CD8-positive, alpha-beta T cell (primary cell): ENCODE measurements at regions of chr4 and their contacts with region 1.

Region 1: GRCh38 chr4:2462218-2462991 is 6.5 kb upstream of the RNF4 start:
- DNase-seq: peak; percentile 31 to 87 (median 69)
- ATAC-seq: peak; percentile 96
- H3K4me3 ChIP-seq: peak overlapping the region in 1 of 2 experiments; percentile 50
- H3K4me3 Mint-ChIP-seq: peak overlapping the region; percentile 78
- H3K27ac ChIP-seq: no peak overlapping the region
- H3K27ac Mint-ChIP-seq: no peak overlapping the region
- H3K4me1 ChIP-seq: peaks cover 4% of the 10 kb centered on the region
- H3K4me1 Mint-ChIP-seq: peaks cover 10% of the 10 kb centered on the region
- H3K27me3 ChIP-seq: no peaks in the 10 kb centered on the region
- H3K27me3 Mint-ChIP-seq: no peaks in the 10 kb centered on the region
- CTCF ChIP-seq: peak; percentile 57

Region 2: DNA sequence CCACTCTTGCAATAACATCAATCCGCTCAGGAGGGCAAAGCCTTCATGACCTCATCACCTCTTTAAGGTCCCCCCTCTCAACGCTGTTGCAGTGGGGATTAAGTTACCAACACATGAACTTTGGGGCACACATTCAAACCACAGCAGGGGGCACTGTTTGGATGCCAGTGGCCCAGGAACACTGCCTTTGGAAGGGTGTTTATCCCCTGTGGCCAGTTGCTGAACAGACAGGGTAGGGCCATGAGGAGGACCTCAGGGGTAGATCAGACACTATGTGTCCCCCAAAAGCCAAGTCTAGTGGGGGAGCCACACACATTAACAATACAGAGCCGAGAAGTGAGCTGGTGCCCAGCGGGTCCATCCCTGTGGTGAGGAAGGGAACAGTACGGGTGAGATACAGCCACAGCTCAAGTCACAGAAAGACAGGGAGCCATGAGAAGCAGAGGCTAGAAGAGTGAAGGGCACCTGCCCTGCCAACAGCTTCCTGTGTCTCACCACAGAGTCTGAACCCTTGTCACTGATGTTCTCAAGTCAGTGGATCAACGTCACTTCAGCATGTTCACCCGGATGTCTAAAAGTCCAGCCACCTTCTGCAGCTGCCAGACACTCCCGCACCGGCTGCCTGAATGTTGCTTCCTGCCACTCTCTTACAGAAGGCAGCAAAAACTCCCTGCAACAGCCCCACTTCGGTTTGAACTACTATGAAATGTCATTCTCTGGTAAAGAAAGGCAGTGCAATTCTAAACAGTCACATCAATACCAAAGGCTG is 180.6 kb before region 1 on chr4:
- CTCF ChIA-PET with region 1: interaction called, 4 read pairs
- POLR2A ChIA-PET with region 1: no interaction called
- intact Hi-C with region 1: loop called in 1 of 2 experiments (anchors 1 kb)
- DNase-seq: peak; percentile 73 to 98 (median 85)
- ATAC-seq: peak; percentile 83
- H3K4me3 ChIP-seq: peak overlapping the region in 1 of 2 experiments; percentile 30
- H3K4me3 Mint-ChIP-seq: peak overlapping the region; percentile 78
- H3K27ac ChIP-seq: peak overlapping the region; percentile 67 to 94
- H3K27ac Mint-ChIP-seq: peak overlapping the region; percentile 99
- H3K4me1 ChIP-seq: peaks cover 46% of the 10 kb centered on the region
- H3K4me1 Mint-ChIP-seq: peaks cover 41% of the 10 kb centered on the region
- H3K27me3 ChIP-seq: no peaks in the 10 kb centered on the region
- H3K27me3 Mint-ChIP-seq: no peaks in the 10 kb centered on the region
- CTCF ChIP-seq: peak; percentile 72

Region 3: GRCh38 chr4:2364654-2365053 is 97.8 kb before region 1 on chr4:
- CTCF ChIA-PET with region 1: no interaction called
- POLR2A ChIA-PET with region 1: no interaction called
- intact Hi-C with region 1: loop called in 1 of 2 experiments (anchors 5 kb)
- DNase-seq: peak; percentile 32 to 83 (median 60)
- ATAC-seq: peak; percentile 85
- H3K4me3 ChIP-seq: peak overlapping the region; percentile 69 to 74
- H3K4me3 Mint-ChIP-seq: peak overlapping the region; percentile 75
- H3K27ac ChIP-seq: peak overlapping the region; percentile 52 to 65
- H3K27ac Mint-ChIP-seq: peak overlapping the region; percentile 83
- H3K4me1 ChIP-seq: peaks cover 19% of the 10 kb centered on the region
- H3K4me1 Mint-ChIP-seq: peaks cover 13% of the 10 kb centered on the region
- H3K27me3 ChIP-seq: no peaks in the 10 kb centered on the region
- H3K27me3 Mint-ChIP-seq: no peaks in the 10 kb centered on the region
- CTCF ChIP-seq: no peak

Region 4: GRCh38 chr4:2441393-2442174 is 20.8 kb before region 1 on chr4:
- CTCF ChIA-PET with region 1: interaction called, 3 read pairs
- POLR2A ChIA-PET with region 1: no interaction called
- intact Hi-C with region 1: loop called in 1 of 2 experiments (anchors 1 kb)
- DNase-seq: peak; percentile 44 to 86 (median 76)
- ATAC-seq: peak; percentile 100
- H3K4me3 ChIP-seq: no peak overlapping the region
- H3K4me3 Mint-ChIP-seq: no peak overlapping the region
- H3K27ac ChIP-seq: no peak overlapping the region
- H3K27ac Mint-ChIP-seq: no peak overlapping the region
- H3K4me1 ChIP-seq: peaks cover 8% of the 10 kb centered on the region
- H3K4me1 Mint-ChIP-seq: peaks cover 2% of the 10 kb centered on the region
- H3K27me3 ChIP-seq: no peaks in the 10 kb centered on the region
- H3K27me3 Mint-ChIP-seq: no peaks in the 10 kb centered on the region
- CTCF ChIP-seq: peak; percentile 82